ENCODE measurements at regions of chr18 and their contacts with region 1.

Region 1: DNA sequence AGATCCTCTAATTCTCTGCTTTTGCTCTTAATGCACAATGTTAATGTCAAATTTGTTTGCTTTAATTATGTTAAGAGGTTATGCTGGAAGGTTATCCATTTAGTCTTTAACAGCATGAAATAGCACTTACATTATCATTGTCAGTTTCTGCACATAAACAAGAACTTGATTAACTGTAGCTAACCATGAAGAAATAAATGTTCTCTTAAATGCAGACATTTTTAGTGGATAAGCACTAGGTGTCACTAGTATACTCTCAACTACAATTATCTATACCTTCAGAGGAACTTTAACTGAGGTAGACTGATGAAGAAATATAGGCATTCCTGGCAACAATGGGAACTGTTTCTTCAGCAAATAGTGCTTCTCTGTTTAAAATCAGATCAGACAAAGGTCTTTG is 178.8 kb upstream of the CHST9 start:
- DNase-seq: peak in 1 of 2 experiments; percentile 1
- H3K4me3 ChIP-seq: no peak overlapping the region
- H3K4me3 Mint-ChIP-seq: no peak overlapping the region
- H3K27ac Mint-ChIP-seq: no peak overlapping the region
- H3K4me1 ChIP-seq: no peaks in the 10 kb centered on the region
- H3K4me1 Mint-ChIP-seq: no peaks in the 10 kb centered on the region
- H3K27me3 ChIP-seq: no peaks in the 10 kb centered on the region
- H3K27me3 Mint-ChIP-seq: peaks cover 3% of the 10 kb centered on the region
- CTCF ChIP-seq: peak in 1 of 2 experiments; percentile 14

Region 2: DNA sequence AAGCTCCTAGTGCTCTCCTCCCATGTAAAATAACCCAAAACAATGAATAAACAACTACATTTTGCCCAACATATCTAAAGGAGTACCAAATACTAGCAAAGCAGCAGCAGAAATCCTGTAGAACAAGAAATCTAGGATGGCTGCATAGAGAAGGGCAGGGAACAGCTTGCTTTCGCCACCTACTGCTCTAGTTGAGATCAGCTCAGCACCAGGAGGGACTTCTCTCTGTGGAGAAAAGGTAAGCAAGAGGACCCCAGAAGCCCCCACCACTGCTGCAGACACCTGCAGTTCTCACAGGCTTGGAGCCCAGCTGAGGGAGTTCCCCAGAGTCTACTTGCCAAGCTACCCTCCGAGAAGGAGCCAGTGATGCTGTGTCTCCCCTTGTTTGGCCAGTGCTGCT is 64.2 kb after region 1 on chr18:
- CTCF ChIA-PET with region 1: no interaction called
- POLR2A ChIA-PET with region 1: no interaction called
- intact Hi-C with region 1: loop called (anchors 1 kb)
- DNase-seq: no peak
- H3K4me3 ChIP-seq: no peak overlapping the region
- H3K4me3 Mint-ChIP-seq: no peak overlapping the region
- H3K27ac Mint-ChIP-seq: no peak overlapping the region
- H3K4me1 ChIP-seq: peaks cover 7% of the 10 kb centered on the region; the same call in 1 of the 2 replicates
- H3K4me1 Mint-ChIP-seq: no peaks in the 10 kb centered on the region
- H3K27me3 ChIP-seq: no peaks in the 10 kb centered on the region
- H3K27me3 Mint-ChIP-seq: no peaks in the 10 kb centered on the region
- CTCF ChIP-seq: no peak

Region 3: DNA sequence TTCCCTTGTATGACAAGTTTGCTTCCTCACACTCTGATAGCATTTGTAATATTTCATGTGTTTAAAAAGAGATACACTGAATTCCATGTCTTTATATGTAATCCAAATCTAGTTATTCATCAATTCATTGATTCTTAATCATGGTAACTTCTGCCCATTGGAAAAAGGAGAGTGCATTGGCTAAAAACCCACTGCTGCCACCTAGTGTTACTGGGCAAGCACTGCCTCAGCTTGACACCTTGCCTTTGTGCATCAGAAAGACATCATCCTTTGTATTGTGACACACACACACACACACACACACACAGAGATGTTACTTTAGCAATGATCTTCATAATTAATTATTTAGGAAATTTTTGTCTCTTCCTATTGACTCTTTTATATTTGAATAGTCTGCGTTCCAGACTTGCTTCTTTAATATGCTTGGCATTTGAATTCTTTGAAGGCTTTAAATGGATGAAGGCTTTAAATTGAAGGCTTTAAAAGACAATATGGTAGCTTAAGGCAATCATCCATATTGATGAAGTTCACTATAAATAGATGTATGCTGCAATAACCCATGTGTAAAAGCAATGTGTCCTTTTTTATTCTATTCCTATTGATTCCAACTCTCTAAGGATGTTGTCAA is 235.4 kb after region 1 on chr18:
- CTCF ChIA-PET with region 1: no interaction called
- POLR2A ChIA-PET with region 1: no interaction called
- intact Hi-C with region 1: loop called (anchors 1 kb)
- DNase-seq: peak in 1 of 2 experiments; percentile 56
- H3K4me3 ChIP-seq: no peak overlapping the region
- H3K4me3 Mint-ChIP-seq: no peak overlapping the region
- H3K27ac Mint-ChIP-seq: no peak overlapping the region
- H3K4me1 ChIP-seq: no peaks in the 10 kb centered on the region
- H3K4me1 Mint-ChIP-seq: peaks cover 1% of the 10 kb centered on the region
- H3K27me3 ChIP-seq: no peaks in the 10 kb centered on the region
- H3K27me3 Mint-ChIP-seq: no peaks in the 10 kb centered on the region
- CTCF ChIP-seq: peak; percentile 29 to 80